ENCODE measurements at regions of chr7 and their contacts with region 1.

Region 1: DNA sequence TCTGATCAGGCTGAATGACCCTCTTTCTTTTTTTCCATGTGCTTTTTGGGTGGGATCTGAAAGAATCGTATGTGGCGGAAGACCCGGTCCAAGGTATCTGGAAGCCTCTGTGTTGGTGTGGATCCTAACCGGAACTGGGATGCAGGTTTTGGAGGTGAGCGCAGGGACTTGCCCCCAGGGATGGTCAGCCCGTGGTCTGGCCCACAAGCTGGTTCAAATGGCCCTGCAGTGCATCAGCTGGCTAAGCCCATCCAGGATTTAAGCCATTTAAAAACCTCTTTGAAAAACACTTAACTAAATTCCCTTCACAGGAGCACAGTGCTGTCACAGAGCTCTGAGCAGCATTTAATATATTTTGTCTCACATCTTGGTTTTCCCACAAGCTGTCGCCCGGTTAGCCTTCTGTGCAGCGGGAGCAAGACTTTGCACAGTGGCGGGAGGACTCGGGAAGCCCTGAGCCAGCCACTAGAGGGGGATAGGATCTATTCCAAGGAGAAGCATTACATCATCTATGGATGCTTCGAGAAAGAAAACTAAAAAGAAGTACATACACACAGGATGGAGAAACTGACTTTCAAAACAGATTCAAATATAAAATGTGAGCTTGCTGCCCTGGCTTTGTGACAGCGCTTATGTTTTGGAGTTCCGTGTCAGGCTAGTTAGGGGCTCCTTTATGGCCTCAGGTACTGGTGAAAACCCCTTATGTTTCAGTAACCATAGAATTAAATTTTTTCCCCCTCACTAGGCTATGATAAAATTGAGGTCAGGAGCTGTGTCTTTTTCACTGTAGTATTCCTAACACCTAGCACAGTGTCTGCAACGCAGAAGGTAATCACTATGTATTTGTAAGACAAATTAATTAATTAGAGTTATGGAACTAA is 11.3 kb downstream of the CPA2 start:
- DNase-seq: no peak

Region 2: DNA sequence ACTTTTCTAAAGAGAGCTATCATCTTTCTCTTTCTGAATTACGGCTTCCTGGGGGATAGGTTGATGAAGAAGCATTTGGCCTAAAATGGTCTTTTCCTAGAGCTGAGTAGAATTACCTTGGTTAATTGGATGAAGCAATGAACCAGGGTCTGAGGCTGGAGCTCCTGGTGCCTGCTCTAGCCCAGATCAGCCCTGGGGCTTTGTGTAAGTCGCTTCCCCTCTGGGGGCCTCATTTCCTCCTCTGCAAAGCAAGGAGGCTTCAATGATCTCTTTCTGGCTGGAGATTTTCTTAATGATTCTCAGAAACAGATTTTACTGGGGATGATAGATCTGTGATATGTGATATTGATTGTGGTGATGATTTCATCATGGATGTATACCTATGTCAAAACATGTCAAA is 14.9 kb before region 1 on chr7:
- intact Hi-C with region 1: no loop called
- DNase-seq: no peak

Region 3: GRCh38 chr7:130365511-130366441 is 87.8 kb after region 1 on chr7:
- intact Hi-C with region 1: no loop called
- DNase-seq: peak; percentile 70

Region 4: DNA sequence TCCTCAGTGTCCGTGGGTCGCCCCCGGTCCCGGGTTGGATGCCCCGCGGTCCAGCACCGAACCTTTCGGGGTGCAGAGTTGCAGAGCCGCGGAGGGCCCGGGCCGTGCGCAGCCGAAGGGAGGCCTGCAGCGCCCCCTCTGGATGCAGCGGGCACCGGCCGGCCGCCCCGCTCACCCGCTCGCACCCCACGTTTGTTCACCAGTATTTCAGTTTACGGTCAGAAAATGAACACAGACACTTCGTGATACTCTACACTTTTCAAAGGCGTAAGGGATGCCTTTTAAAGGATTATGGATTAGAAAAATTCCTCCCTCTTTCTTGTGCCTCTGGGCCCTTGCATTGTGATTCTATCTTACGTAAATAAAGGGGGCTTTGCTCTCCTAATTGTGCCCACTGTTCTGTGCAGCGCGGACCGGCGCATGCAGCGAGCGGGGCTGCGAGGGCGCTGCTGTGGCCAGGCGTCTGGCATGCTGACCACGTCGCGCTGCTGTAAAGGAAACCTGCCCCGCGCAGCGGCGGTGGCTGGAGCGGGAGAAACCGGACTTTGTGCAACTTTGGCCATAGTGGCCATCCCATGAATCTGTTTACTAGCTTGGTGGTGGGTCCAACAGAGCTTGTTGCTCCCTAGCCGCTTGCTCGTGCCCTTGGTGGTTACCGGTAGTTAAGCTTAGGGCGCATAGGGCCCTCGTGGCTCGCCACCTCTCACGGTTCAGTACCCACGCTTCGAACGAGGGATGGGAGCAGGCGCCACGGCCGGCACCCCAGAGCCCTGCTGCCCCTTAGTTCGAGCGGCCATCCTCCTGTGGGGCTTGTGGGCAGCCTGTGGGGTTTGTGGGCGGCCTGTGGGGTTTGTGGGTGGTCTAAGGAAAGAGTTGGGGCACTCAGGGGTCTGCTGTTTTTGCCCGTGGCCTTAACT is 213.1 kb after region 1 on chr7:
- intact Hi-C with region 1: loop called in 1 of 2 experiments (anchors 10 kb)
- DNase-seq: peak; percentile 84